Vagina (tissue), 2 donors: ENCODE measurements at regions of chr3 and their contacts with region 1.

Region 1: DNA sequence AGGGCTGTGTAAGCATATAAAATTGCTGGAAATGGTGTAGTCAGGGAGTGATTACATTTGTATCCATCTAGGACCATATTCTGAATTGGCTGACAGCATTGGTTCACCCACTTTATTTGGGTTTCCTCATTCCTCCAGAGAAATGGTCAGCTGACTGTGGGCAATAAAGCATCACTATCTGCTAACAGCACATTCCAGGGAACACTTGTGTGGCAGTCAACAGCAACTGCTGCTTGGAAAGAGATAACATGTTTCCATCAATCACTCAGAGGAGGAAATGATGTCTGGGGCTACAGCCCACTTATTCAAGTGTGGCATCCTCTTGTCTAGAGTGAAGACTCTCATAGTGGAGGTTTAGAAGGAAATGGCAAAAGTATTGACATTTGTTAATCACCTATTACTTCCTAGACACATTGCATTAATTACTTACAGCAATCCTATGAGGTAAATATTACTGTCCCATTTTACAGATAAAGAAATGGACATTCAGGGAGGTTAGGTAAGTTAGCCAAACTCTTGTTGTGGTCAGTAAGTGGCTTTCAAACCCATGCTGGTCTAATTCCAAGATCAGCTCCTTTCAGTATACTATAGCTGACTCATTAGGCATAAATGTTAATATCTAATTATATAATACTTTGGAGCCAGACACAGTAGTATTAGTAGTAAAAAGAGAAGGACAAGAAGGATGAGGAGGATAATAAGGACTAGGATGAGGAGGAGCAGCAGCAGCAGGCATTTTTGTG is 247.8 kb downstream of the ALCAM start:
- DNase-seq: no peak
- H3K4me3 ChIP-seq: no peak overlapping the region
- H3K27ac ChIP-seq: no peak overlapping the region
- H3K4me1 ChIP-seq: no peaks in the 10 kb centered on the region
- H3K27me3 ChIP-seq: no peaks in the 10 kb centered on the region
- CTCF ChIP-seq: no peak
- POLR2A ChIP-seq: no peak

Region 2: DNA sequence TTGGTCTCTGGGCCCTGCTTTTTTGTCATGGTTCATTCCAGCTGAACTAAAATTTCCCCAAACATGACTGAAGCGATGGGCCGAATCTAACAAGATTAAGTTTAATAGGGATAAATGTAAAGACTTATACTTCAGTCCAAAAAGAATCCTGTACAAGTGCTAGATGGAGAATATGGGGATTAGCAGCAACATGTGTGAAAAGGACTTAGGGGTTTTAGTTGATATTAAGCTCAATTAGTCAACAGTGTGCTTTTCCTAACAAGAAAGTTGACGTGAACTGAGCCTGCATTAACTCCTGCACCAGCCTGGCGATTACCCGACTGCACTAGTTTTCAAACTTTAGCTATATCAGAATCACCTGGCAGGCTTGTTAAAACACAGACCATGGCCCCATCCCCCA is 1847.3 kb after region 1 on chr3:
- intact Hi-C with region 1: loop called (anchors 5 kb)
- DNase-seq: no peak
- H3K4me3 ChIP-seq: no peak overlapping the region
- H3K27ac ChIP-seq: no peak overlapping the region
- H3K4me1 ChIP-seq: no peaks in the 10 kb centered on the region
- H3K27me3 ChIP-seq: no peaks in the 10 kb centered on the region
- CTCF ChIP-seq: no peak
- POLR2A ChIP-seq: no peak